ENCODE measurements at regions of chr3 and their contacts with region 1.

Region 1: GRCh38 chr3:12135029-12135657 is 23.6 kb downstream of the TIMP4 start:
- DNase-seq: peak; percentile 53
- H3K4me3 ChIP-seq: no peak overlapping the region
- H3K27ac ChIP-seq: no peak overlapping the region
- H3K4me1 ChIP-seq: no peaks in the 10 kb centered on the region
- CTCF ChIP-seq: peak; percentile 91

Region 2: DNA sequence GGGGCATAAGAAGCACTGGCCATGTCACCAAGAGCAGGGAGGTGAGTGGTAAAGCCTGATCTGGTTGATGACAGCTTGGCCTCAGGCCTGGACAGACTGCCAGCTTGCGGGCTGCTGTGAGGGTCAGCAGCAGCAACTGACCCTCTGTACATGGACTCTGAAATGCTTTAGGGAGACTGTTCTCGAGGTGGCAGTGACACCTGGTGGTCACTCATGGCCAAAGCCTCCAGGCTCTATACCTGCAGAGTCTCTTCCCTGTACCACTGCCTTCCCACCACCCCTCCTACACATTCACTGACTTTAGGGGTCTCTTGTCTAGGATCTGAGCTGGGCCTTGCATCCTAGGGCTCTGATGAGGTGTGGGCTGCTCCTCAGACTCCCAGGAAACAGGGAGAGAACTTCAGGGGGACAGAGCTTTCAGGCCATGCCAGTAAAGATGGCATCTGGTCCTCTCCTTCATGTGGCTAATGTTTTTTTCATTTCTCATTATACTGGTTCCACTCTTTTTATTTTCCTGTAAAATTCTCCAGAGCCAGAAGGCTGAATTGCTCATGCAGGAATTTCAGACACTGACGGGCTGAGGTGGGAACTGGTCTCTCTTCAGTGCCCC is 40.8 kb after region 1 on chr3:
- CTCF ChIA-PET with region 1: interaction called, 5 read pairs
- POLR2A ChIA-PET with region 1: no interaction called
- intact Hi-C with region 1: loop called (anchors 1 kb)
- DNase-seq: peak; percentile 27
- H3K4me3 ChIP-seq: no peak overlapping the region
- H3K27ac ChIP-seq: no peak overlapping the region
- H3K4me1 ChIP-seq: no peaks in the 10 kb centered on the region
- CTCF ChIP-seq: peak; percentile 76